ENCODE measurements at regions of chrX and their contacts with region 1.

Region 1: GRCh38 chrX:40013266-40014195 is 84.2 kb downstream of the BCOR start:
- DNase-seq: peak; percentile 79
- ATAC-seq: peak; percentile 69
- H3K4me3 ChIP-seq: peak overlapping the region; percentile 77
- H3K27ac ChIP-seq: peak overlapping the region; percentile 83
- H3K4me1 ChIP-seq: peaks cover 24% of the 10 kb centered on the region
- H3K27me3 ChIP-seq: no peaks in the 10 kb centered on the region
- CTCF ChIP-seq: no peak

Region 2: GRCh38 chrX:39675601-39676000 is 337.9 kb before region 1 on chrX:
- CTCF ChIA-PET with region 1: no interaction called
- POLR2A ChIA-PET with region 1: no interaction called
- intact Hi-C with region 1: no loop called
- DNase-seq: no peak
- ATAC-seq: no peak
- H3K4me3 ChIP-seq: no peak overlapping the region
- H3K27ac ChIP-seq: no peak overlapping the region
- H3K4me1 ChIP-seq: no peaks in the 10 kb centered on the region
- H3K27me3 ChIP-seq: 0 out of 2 replicates have a peak, but pooled peaks cover 14% of the 10 kb centered on the region
- CTCF ChIP-seq: no peak

Region 3: GRCh38 chrX:39730662-39731397 is 282.7 kb before region 1 on chrX:
- CTCF ChIA-PET with region 1: interaction called, 7 read pairs
- POLR2A ChIA-PET with region 1: no interaction called
- intact Hi-C with region 1: loop called (anchors 1 kb)
- DNase-seq: peak; percentile 74
- ATAC-seq: peak; percentile 91
- H3K4me3 ChIP-seq: 0 out of 2 replicates have a peak overlapping the region, but pooled peaks have one; percentile 4
- H3K27ac ChIP-seq: 0 out of 2 replicates have a peak overlapping the region, but pooled peaks have one; percentile 22
- H3K4me1 ChIP-seq: peaks cover 36% of the 10 kb centered on the region
- H3K27me3 ChIP-seq: no peaks in the 10 kb centered on the region
- CTCF ChIP-seq: peak; percentile 82

Region 4: GRCh38 chrX:39814391-39814790 is 199.1 kb before region 1 on chrX:
- CTCF ChIA-PET with region 1: no interaction called
- POLR2A ChIA-PET with region 1: interaction called, 10 read pairs
- intact Hi-C with region 1: loop called (anchors 10 kb)
- DNase-seq: peak; percentile 38
- ATAC-seq: no peak
- H3K4me3 ChIP-seq: no peak overlapping the region
- H3K27ac ChIP-seq: peak overlapping the region; percentile 31; the same call in 1 of the 2 replicates
- H3K4me1 ChIP-seq: peaks cover 44% of the 10 kb centered on the region
- H3K27me3 ChIP-seq: no peaks in the 10 kb centered on the region
- CTCF ChIP-seq: peak; percentile 68

Region 5: DNA sequence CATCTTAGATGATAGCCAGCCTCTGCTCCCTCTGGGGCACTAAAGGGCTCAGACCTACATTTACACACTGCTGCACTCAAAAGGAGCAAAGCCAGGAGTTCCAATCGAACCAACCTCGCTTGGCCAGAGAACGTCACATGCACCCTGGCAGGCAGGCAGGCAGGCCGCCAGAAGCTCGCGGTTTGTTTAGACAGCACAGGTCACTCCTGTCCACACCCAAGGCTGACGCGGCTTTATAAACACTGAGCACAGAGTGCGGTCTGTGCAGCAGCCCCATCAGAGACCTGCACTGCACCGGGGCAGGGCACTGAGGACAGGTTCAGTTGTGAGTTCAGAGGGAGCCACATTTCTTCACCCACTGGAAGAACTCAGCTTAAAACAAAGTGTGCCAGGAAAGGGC is 59.6 kb before region 1 on chrX:
- CTCF ChIA-PET with region 1: interaction called, 7 read pairs
- POLR2A ChIA-PET with region 1: interaction called, 4 read pairs
- intact Hi-C with region 1: loop called (anchors 2 kb)
- DNase-seq: peak; percentile 94
- ATAC-seq: peak; percentile 99
- H3K4me3 ChIP-seq: no peak overlapping the region
- H3K27ac ChIP-seq: peak overlapping the region; percentile 70
- H3K4me1 ChIP-seq: peaks cover 27% of the 10 kb centered on the region
- H3K27me3 ChIP-seq: no peaks in the 10 kb centered on the region
- CTCF ChIP-seq: no peak

Region 6: GRCh38 chrX:40068044-40068443 is 54.5 kb after region 1 on chrX:
- CTCF ChIA-PET with region 1: no interaction called
- POLR2A ChIA-PET with region 1: no interaction called
- intact Hi-C with region 1: no loop called
- DNase-seq: peak; percentile 45
- ATAC-seq: no peak; the same call in 1 of the 2 replicates
- H3K4me3 ChIP-seq: no peak overlapping the region
- H3K27ac ChIP-seq: no peak overlapping the region
- H3K4me1 ChIP-seq: no peaks in the 10 kb centered on the region
- H3K27me3 ChIP-seq: no peaks in the 10 kb centered on the region
- CTCF ChIP-seq: peak; percentile 38

Region 7: DNA sequence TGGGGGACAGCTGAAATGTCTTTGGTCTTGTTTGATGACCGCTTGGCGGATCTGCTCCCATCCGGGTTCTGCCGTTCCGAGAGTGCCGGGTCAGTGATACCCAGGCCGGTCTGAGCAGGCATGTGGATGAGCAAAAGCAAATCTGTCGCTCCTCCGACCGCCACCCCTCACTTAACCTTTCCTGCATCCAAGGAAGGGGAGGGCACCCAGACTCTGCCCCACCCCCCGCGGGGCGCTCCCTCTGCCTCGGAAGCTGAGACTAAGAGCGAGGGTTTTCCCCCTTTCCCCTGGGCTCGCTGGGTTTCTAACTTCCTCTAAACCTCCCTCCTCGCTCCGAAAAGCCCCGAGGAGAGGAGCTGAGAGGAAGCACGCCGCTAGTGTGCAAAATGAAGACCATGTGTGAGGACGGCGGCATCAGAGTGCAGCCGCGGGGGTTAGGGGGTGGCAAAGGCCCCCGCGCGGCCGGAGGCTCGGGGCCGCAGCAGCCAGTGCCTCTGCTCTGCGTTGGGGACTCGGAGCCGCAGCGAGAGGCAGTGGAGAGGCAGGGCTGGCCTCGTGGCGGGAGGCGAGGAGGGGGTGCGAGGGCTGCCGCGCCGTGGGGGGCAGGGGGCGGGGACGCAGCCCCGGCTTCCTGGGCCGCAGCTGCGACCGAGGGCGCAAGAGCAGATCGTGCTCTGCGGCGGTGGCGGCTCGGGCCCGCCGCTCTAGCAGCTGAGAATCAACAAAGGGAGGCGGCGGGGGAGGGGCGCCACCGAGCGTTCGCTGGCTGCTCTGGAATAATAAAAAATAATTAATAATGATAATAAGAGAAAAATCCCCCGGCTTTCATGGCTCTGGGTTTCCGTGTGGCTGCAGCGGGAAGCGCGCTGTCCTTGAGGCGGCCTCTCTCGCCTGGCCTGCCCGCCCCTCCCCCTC is 140.1 kb after region 1 on chrX:
- CTCF ChIA-PET with region 1: no interaction called
- POLR2A ChIA-PET with region 1: no interaction called
- intact Hi-C with region 1: loop called (anchors 2 kb)
- DNase-seq: peak; percentile 36
- ATAC-seq: peak; percentile 2; the same call in 1 of the 2 replicates
- H3K4me3 ChIP-seq: peak overlapping the region; percentile 84
- H3K27ac ChIP-seq: no peak overlapping the region
- H3K4me1 ChIP-seq: peaks cover 32% of the 10 kb centered on the region
- H3K27me3 ChIP-seq: no peaks in the 10 kb centered on the region
- CTCF ChIP-seq: 0 out of 2 replicates have a peak, but pooled peaks have one; percentile 8

Measured in PC-3 (cell line).